ENCODE measurements at regions of chr22 and their contacts with region 1.

Region 1: GRCh38 chr22:38461414-38462081 is 6.3 kb upstream of the KDELR3 start:
- DNase-seq: peak; percentile 86 to 93 (median 93)
- ATAC-seq: peak; percentile 73 to 76
- H3K4me3 ChIP-seq: no peak overlapping the region
- H3K27ac ChIP-seq: no peak overlapping the region
- H3K4me1 ChIP-seq: peaks cover 2% of the 10 kb centered on the region
- H3K27me3 ChIP-seq: no peaks in the 10 kb centered on the region

Region 2: DNA sequence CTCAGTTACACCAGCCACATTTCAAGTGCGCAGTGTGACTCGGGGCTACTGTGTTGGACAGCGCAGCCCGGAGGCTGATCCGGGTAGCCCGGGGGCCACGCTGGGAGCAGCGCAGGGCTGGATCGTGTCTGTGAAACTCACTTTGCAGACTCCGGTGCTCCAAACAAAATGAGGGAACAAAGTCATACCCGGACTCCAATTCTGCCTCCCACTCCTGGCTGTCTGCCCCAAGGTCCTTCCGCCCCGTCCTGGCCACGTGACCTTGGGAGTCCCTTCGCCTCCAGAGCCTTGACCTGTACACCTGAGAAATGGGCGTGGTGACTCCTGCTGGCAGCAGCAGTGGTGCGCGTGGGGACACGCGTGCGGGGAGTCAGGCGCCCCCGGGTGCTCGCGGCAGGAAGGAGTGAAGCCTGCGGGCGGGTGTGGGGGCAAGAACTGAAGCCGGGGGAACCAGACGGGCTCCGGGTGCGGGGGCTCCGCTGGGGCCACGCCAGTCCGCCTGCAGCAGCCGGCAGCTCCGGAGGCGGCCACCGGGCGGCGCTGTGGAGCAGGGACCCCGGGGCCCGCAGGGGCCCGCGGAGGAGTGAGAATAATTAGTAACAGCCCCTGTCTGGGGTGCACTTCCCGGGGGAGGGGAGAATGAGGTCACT is 49.0 kb before region 1 on chr22:
- intact Hi-C with region 1: loop called in 1 of 4 experiments (anchors 10 kb)
- DNase-seq: peak in 2 of 3 donors; percentile 63 to 75
- ATAC-seq: peak; percentile 15 to 47
- H3K4me3 ChIP-seq: peak overlapping the region; percentile 17
- H3K27ac ChIP-seq: peak overlapping the region; percentile 37
- H3K4me1 ChIP-seq: peaks cover 3% of the 10 kb centered on the region
- H3K27me3 ChIP-seq: no peaks in the 10 kb centered on the region

Region 3: GRCh38 chr22:38843201-38843715 is 381.7 kb after region 1 on chr22:
- intact Hi-C with region 1: no loop called
- DNase-seq: peak; percentile 57 to 83 (median 77)
- ATAC-seq: peak; percentile 66 to 80
- H3K4me3 ChIP-seq: peak overlapping the region; percentile 83
- H3K27ac ChIP-seq: no peak overlapping the region
- H3K4me1 ChIP-seq: no peaks in the 10 kb centered on the region
- H3K27me3 ChIP-seq: no peaks in the 10 kb centered on the region

Measured in right cardiac atrium (tissue), 5 donors.